PC-9 (cell line): ENCODE measurements at regions of chr15 and their contacts with region 1.

Region 1: GRCh38 chr15:68749793-68750192 is 70.9 kb downstream of the ANP32A start:
- DNase-seq: no peak
- H3K4me3 ChIP-seq: no peak overlapping the region
- H3K27ac ChIP-seq: no peak overlapping the region
- H3K4me1 ChIP-seq: no peaks in the 10 kb centered on the region
- H3K27me3 ChIP-seq: no peaks in the 10 kb centered on the region
- CTCF ChIP-seq: no peak

Region 2: GRCh38 chr15:68725737-68726136 is 24.1 kb before region 1 on chr15:
- CTCF ChIA-PET with region 1: no interaction called
- POLR2A ChIA-PET with region 1: no interaction called
- intact Hi-C with region 1: no loop called
- DNase-seq: no peak
- H3K4me3 ChIP-seq: no peak overlapping the region
- H3K27ac ChIP-seq: no peak overlapping the region
- H3K4me1 ChIP-seq: no peaks in the 10 kb centered on the region
- H3K27me3 ChIP-seq: no peaks in the 10 kb centered on the region
- CTCF ChIP-seq: no peak

Region 3: DNA sequence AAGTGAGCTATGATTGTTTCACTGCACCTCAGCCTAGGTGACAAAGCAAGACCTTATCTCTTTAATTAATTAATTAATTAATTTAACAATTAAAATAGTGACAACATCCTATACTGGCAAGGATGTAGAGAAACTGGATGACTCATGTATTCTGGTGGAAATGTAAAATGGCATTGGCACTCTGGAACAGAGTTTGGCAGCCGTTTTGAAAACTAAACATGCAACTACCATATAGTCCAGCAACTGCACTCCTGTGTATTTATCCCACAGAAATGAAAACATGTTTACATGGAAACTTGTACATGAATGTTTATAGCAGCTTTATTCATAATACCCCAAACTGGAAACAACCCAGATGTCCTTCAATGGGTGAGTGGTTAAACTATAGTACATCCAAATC is 14.3 kb after region 1 on chr15:
- CTCF ChIA-PET with region 1: no interaction called
- POLR2A ChIA-PET with region 1: no interaction called
- intact Hi-C with region 1: loop called (anchors 1 kb)
- DNase-seq: no peak
- H3K4me3 ChIP-seq: no peak overlapping the region
- H3K27ac ChIP-seq: no peak overlapping the region
- H3K4me1 ChIP-seq: no peaks in the 10 kb centered on the region
- H3K27me3 ChIP-seq: no peaks in the 10 kb centered on the region
- CTCF ChIP-seq: no peak

Region 4: DNA sequence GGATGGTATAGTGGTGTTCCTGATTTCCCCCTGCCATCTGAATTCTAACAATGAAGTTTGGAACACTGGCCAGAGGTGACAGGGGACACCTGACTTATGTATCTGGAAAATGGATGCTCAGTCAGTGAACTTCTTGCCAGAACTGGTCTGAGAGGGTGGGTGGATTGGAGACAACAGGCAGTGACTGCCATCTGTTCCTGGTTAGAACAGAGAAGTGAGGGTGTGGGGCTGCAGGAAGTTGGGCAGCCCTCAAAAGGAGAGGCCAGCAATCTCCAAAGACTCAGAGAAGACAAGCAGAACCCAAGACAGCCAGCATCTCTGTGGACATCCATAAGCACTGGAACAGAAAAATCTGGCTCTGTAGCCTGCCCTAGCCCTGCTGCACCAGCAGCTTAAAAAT is 20.4 kb after region 1 on chr15:
- CTCF ChIA-PET with region 1: interaction called, 14 read pairs
- POLR2A ChIA-PET with region 1: no interaction called
- intact Hi-C with region 1: no loop called
- DNase-seq: no peak
- H3K4me3 ChIP-seq: no peak overlapping the region
- H3K27ac ChIP-seq: no peak overlapping the region
- H3K4me1 ChIP-seq: no peaks in the 10 kb centered on the region
- H3K27me3 ChIP-seq: no peaks in the 10 kb centered on the region
- CTCF ChIP-seq: no peak

Region 5: GRCh38 chr15:69834761-69835160 is 1085.0 kb after region 1 on chr15:
- CTCF ChIA-PET with region 1: no interaction called
- POLR2A ChIA-PET with region 1: no interaction called
- intact Hi-C with region 1: no loop called
- DNase-seq: no peak
- H3K4me3 ChIP-seq: no peak overlapping the region
- H3K27ac ChIP-seq: no peak overlapping the region
- H3K4me1 ChIP-seq: no peaks in the 10 kb centered on the region; the same call in 1 of the 2 replicates
- H3K27me3 ChIP-seq: no peaks in the 10 kb centered on the region
- CTCF ChIP-seq: no peak